CD8-positive, alpha-beta memory T cell (primary cell): ENCODE measurements at regions of chr3 and their contacts with region 1.

Region 1: GRCh38 chr3:50100956-50101845 is 12.5 kb downstream of the RBM5 start:
- DNase-seq: no peak
- H3K4me3 ChIP-seq: no peak overlapping the region
- H3K4me3 Mint-ChIP-seq: no peak overlapping the region
- H3K27ac ChIP-seq: no peak overlapping the region
- H3K27ac Mint-ChIP-seq: peak overlapping the region in 2 of 8 donors; percentile 38 to 60
- H3K4me1 ChIP-seq: no peaks in the 10 kb centered on the region
- H3K4me1 Mint-ChIP-seq: peaks cover 7 to 21% (median 8%) of the 10 kb centered on the region in 3 donors
- H3K27me3 ChIP-seq: no peaks in the 10 kb centered on the region
- H3K27me3 Mint-ChIP-seq: no peaks in the 10 kb centered on the region

Region 2: GRCh38 chr3:50068134-50068533 is 33.1 kb before region 1 on chr3:
- CTCF ChIA-PET with region 1: no interaction called
- POLR2A ChIA-PET with region 1: no interaction called
- DNase-seq: no peak
- H3K4me3 ChIP-seq: no peak overlapping the region
- H3K4me3 Mint-ChIP-seq: no peak overlapping the region
- H3K27ac ChIP-seq: no peak overlapping the region
- H3K27ac Mint-ChIP-seq: peak overlapping the region in 2 of 8 donors; percentile 1 to 23
- H3K4me1 ChIP-seq: no peaks in the 10 kb centered on the region
- H3K4me1 Mint-ChIP-seq: no peaks in the 10 kb centered on the region
- H3K27me3 ChIP-seq: no peaks in the 10 kb centered on the region
- H3K27me3 Mint-ChIP-seq: no peaks in the 10 kb centered on the region

Region 3: GRCh38 chr3:50121416-50122032 is 20.3 kb after region 1 on chr3:
- CTCF ChIA-PET with region 1: interaction called, 13 read pairs
- POLR2A ChIA-PET with region 1: no interaction called
- DNase-seq: peak; percentile 51 to 78 (median 57)
- H3K4me3 ChIP-seq: no peak overlapping the region
- H3K4me3 Mint-ChIP-seq: no peak overlapping the region
- H3K27ac ChIP-seq: no peak overlapping the region
- H3K27ac Mint-ChIP-seq: peak overlapping the region in 2 of 8 donors; percentile 45 to 64
- H3K4me1 ChIP-seq: no peaks in the 10 kb centered on the region
- H3K4me1 Mint-ChIP-seq: peaks cover 0 to 1% (median 0%) of the 10 kb centered on the region in 3 donors
- H3K27me3 ChIP-seq: no peaks in the 10 kb centered on the region
- H3K27me3 Mint-ChIP-seq: no peaks in the 10 kb centered on the region